B cell (primary cell): ENCODE measurements at regions of chr15 and their contacts with region 1.

Region 1: GRCh38 chr15:63188926-63189871 is at the start of gene RAB8B:
- DNase-seq: peak; percentile 94
- ATAC-seq: peak; percentile 86
- H3K4me3 ChIP-seq: peak within 1 kb of the TSS; percentile 78 to 99 (median 94)
- H3K4me3 Mint-ChIP-seq: peak within 1 kb of the TSS; percentile 98
- H3K27ac ChIP-seq: peak within 1 kb of the TSS; percentile 92 to 93
- H3K27ac Mint-ChIP-seq: peak within 1 kb of the TSS; percentile 94
- H3K4me1 ChIP-seq: peaks cover 39 to 44% of the 10 kb centered on the region in 2 donors
- H3K4me1 Mint-ChIP-seq: peaks cover 53% of the 10 kb centered on the region
- H3K27me3 ChIP-seq: no peaks in the 10 kb centered on the region
- H3K27me3 Mint-ChIP-seq: no peaks in the 10 kb centered on the region
- CTCF ChIP-seq: no peak
- total RNA-seq, gene RAB8B: 58.1 and 61.3 TPM in 2 replicates

Region 2: GRCh38 chr15:63048115-63048775 is 141.0 kb before region 1 on chr15:
- CTCF ChIA-PET with region 1: no interaction called
- POLR2A ChIA-PET with region 1: no interaction called
- intact Hi-C with region 1: loop called (anchors 1 kb)
- DNase-seq: peak; percentile 92
- ATAC-seq: peak; percentile 86
- H3K4me3 ChIP-seq: peak overlapping the region in 4 of 5 experiments; percentile 56 to 83 (median 74)
- H3K4me3 Mint-ChIP-seq: peak overlapping the region; percentile 96
- H3K27ac ChIP-seq: no peak overlapping the region
- H3K27ac Mint-ChIP-seq: peak overlapping the region; percentile 86
- H3K4me1 ChIP-seq: peaks cover 21 to 27% of the 10 kb centered on the region in 2 donors
- H3K4me1 Mint-ChIP-seq: peaks cover 31% of the 10 kb centered on the region
- H3K27me3 ChIP-seq: peaks cover 0 to 39% (median 34%) of the 10 kb centered on the region in 4 experiments
- H3K27me3 Mint-ChIP-seq: peaks cover 27% of the 10 kb centered on the region
- CTCF ChIP-seq: peak; percentile 97

Region 3: GRCh38 chr15:63157118-63157843 is 31.9 kb before region 1 on chr15 and contains the start of gene RPS27L:
- CTCF ChIA-PET with region 1: no interaction called
- POLR2A ChIA-PET with region 1: interaction called, 13 read pairs
- intact Hi-C with region 1: loop called (anchors 1 kb)
- DNase-seq: peak; percentile 90
- ATAC-seq: peak; percentile 96
- H3K4me3 ChIP-seq: peak within 1 kb of the TSS; percentile 83 to 95 (median 88)
- H3K4me3 Mint-ChIP-seq: peak within 1 kb of the TSS; percentile 96
- H3K27ac ChIP-seq: peak within 1 kb of the TSS; percentile 68 to 81
- H3K27ac Mint-ChIP-seq: peak within 1 kb of the TSS; percentile 99
- H3K4me1 ChIP-seq: peaks cover 14 to 17% of the 10 kb centered on the region in 2 donors
- H3K4me1 Mint-ChIP-seq: peaks cover 28% of the 10 kb centered on the region
- H3K27me3 ChIP-seq: no peaks in the 10 kb centered on the region
- H3K27me3 Mint-ChIP-seq: no peaks in the 10 kb centered on the region
- CTCF ChIP-seq: no peak
- total RNA-seq, gene RPS27L: 49.4 and 50.9 TPM in 2 replicates

Region 4: GRCh38 chr15:63212050-63213004 is 23.1 kb after region 1 on chr15:
- CTCF ChIA-PET with region 1: interaction called, 16 read pairs
- POLR2A ChIA-PET with region 1: interaction called, 4 read pairs
- intact Hi-C with region 1: loop called (anchors 2 kb)
- DNase-seq: no peak
- ATAC-seq: peak; percentile 35
- H3K4me3 ChIP-seq: no peak overlapping the region
- H3K4me3 Mint-ChIP-seq: peak overlapping the region; percentile 65
- H3K27ac ChIP-seq: peak overlapping the region in 1 of 2 donors; percentile 35
- H3K27ac Mint-ChIP-seq: peak overlapping the region; percentile 89
- H3K4me1 ChIP-seq: peaks cover 42 to 45% of the 10 kb centered on the region in 2 donors
- H3K4me1 Mint-ChIP-seq: peaks cover 70% of the 10 kb centered on the region
- H3K27me3 ChIP-seq: no peaks in the 10 kb centered on the region
- H3K27me3 Mint-ChIP-seq: no peaks in the 10 kb centered on the region
- CTCF ChIP-seq: no peak

Region 5: GRCh38 chr15:63238796-63239195 is 49.6 kb after region 1 on chr15:
- CTCF ChIA-PET with region 1: interaction called, 4 read pairs
- POLR2A ChIA-PET with region 1: interaction called, 10 read pairs
- intact Hi-C with region 1: no loop called
- DNase-seq: no peak
- ATAC-seq: peak; percentile 36
- H3K4me3 ChIP-seq: no peak overlapping the region
- H3K4me3 Mint-ChIP-seq: no peak overlapping the region
- H3K27ac ChIP-seq: no peak overlapping the region
- H3K27ac Mint-ChIP-seq: no peak overlapping the region
- H3K4me1 ChIP-seq: peaks cover 27 to 29% of the 10 kb centered on the region in 2 donors
- H3K4me1 Mint-ChIP-seq: peaks cover 66% of the 10 kb centered on the region
- H3K27me3 ChIP-seq: no peaks in the 10 kb centered on the region
- H3K27me3 Mint-ChIP-seq: no peaks in the 10 kb centered on the region
- CTCF ChIP-seq: no peak

Region 6: GRCh38 chr15:63473999-63474809 is 285.0 kb after region 1 on chr15:
- CTCF ChIA-PET with region 1: no interaction called
- POLR2A ChIA-PET with region 1: no interaction called
- intact Hi-C with region 1: loop called (anchors 5 kb)
- DNase-seq: peak; percentile 85
- ATAC-seq: peak; percentile 69
- H3K4me3 ChIP-seq: peak overlapping the region in 4 of 5 experiments; percentile 4 to 38 (median 30)
- H3K4me3 Mint-ChIP-seq: peak overlapping the region; percentile 83
- H3K27ac ChIP-seq: peak overlapping the region; percentile 90 to 95
- H3K27ac Mint-ChIP-seq: peak overlapping the region; percentile 97
- H3K4me1 ChIP-seq: peaks cover 59 to 64% of the 10 kb centered on the region in 2 donors
- H3K4me1 Mint-ChIP-seq: peaks cover 69% of the 10 kb centered on the region
- H3K27me3 ChIP-seq: no peaks in the 10 kb centered on the region
- H3K27me3 Mint-ChIP-seq: no peaks in the 10 kb centered on the region
- CTCF ChIP-seq: peak; percentile 25